ENCODE measurements at regions of chr2 and their contacts with region 1.

Region 1: GRCh38 chr2:11583840-11584524 is 50.1 kb downstream of the GREB1 start:
- DNase-seq: peak; percentile 95
- H3K4me3 ChIP-seq: no peak overlapping the region; a peak in 1 of 4 replicates
- H3K27ac ChIP-seq: peak overlapping the region in 1 of 2 experiments; percentile 80; a peak in 2 of 4 replicates
- H3K4me1 ChIP-seq: no peaks in the 10 kb centered on the region; a peak in 2 of 4 replicates
- H3K27me3 ChIP-seq: no peaks in the 10 kb centered on the region
- CTCF ChIP-seq: peak; percentile 100
- EP300 ChIP-seq: peak in 1 of 2 experiments; percentile 12; a peak in 1 of 4 replicates
- RAD21 ChIP-seq: peak; percentile 100

Region 2: DNA sequence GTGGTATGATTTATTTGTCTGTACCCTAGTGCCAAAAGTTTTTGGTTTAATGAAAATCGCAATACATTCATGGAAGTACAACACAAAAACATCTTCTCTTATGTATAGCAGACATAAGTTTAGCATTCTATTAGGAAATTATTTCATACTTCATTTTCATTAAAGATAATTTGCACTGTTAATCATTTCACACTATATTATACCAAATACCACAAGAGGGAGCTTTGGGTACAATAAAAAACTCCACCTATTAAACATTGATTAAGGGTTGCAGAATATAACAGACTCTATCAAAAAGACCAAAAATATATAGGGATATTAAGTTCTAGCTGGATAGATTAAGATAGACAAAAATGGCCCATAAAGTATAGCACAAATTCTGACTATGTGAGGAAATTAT is 349.7 kb before region 1 on chr2:
- CTCF ChIA-PET with region 1: interaction called, 10 read pairs
- POLR2A ChIA-PET with region 1: no interaction called
- DNase-seq: peak; percentile 31
- H3K4me3 ChIP-seq: no peak overlapping the region
- H3K27ac ChIP-seq: no peak overlapping the region
- H3K4me1 ChIP-seq: no peaks in the 10 kb centered on the region
- H3K27me3 ChIP-seq: no peaks in the 10 kb centered on the region
- CTCF ChIP-seq: peak; percentile 82
- EP300 ChIP-seq: no peak
- RAD21 ChIP-seq: peak; percentile 76

Region 3: GRCh38 chr2:11477994-11478393 is 106.0 kb before region 1 on chr2:
- CTCF ChIA-PET with region 1: interaction called, 708 read pairs
- POLR2A ChIA-PET with region 1: interaction called, 7 read pairs
- DNase-seq: peak; percentile 74
- H3K4me3 ChIP-seq: no peak overlapping the region; a peak in 1 of 4 replicates
- H3K27ac ChIP-seq: no peak overlapping the region
- H3K4me1 ChIP-seq: peaks cover 0 to 3% of the 10 kb centered on the region in 2 experiments; a peak in 1 of 4 replicates
- H3K27me3 ChIP-seq: peaks cover 12% of the 10 kb centered on the region; the same call in 1 of the 2 replicates
- CTCF ChIP-seq: peak; percentile 99
- EP300 ChIP-seq: 0 out of 4 replicates have a peak, but pooled peaks of 1 of the 2 experiments have one; percentile 12
- RAD21 ChIP-seq: peak; percentile 93

Region 4: DNA sequence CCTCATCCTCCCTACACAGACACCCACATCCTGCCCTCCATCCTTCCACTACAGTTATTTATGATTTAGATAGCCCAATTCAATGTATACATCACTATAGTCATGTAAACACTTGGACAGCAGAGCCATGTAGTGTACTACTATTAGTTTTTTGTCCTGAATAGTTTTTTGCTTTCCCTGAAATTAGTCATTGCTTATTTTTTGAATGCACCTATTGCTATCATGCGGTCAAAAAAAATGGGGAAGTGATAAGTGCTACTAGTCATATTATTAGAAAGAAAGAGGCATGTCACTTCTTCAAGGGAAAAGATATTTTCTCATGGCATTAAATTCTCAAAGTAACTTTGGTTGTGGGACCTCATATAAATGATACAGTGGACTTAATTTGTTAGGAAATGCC is 57.0 kb before region 1 on chr2:
- CTCF ChIA-PET with region 1: interaction called, 10 read pairs
- POLR2A ChIA-PET with region 1: no interaction called
- DNase-seq: no peak
- H3K4me3 ChIP-seq: no peak overlapping the region
- H3K27ac ChIP-seq: no peak overlapping the region
- H3K4me1 ChIP-seq: peaks cover 0 to 13% of the 10 kb centered on the region in 2 experiments; a peak in 2 of 4 replicates
- H3K27me3 ChIP-seq: no peaks in the 10 kb centered on the region
- CTCF ChIP-seq: no peak
- EP300 ChIP-seq: no peak
- RAD21 ChIP-seq: no peak

Region 5: GRCh38 chr2:11573418-11574175 is 10.4 kb before region 1 on chr2:
- CTCF ChIA-PET with region 1: interaction called, 123 read pairs
- POLR2A ChIA-PET with region 1: no interaction called
- DNase-seq: no peak
- H3K4me3 ChIP-seq: no peak overlapping the region
- H3K27ac ChIP-seq: no peak overlapping the region
- H3K4me1 ChIP-seq: no peaks in the 10 kb centered on the region; a peak in 1 of 4 replicates
- H3K27me3 ChIP-seq: no peaks in the 10 kb centered on the region
- CTCF ChIP-seq: no peak
- EP300 ChIP-seq: no peak
- RAD21 ChIP-seq: no peak

Region 6: DNA sequence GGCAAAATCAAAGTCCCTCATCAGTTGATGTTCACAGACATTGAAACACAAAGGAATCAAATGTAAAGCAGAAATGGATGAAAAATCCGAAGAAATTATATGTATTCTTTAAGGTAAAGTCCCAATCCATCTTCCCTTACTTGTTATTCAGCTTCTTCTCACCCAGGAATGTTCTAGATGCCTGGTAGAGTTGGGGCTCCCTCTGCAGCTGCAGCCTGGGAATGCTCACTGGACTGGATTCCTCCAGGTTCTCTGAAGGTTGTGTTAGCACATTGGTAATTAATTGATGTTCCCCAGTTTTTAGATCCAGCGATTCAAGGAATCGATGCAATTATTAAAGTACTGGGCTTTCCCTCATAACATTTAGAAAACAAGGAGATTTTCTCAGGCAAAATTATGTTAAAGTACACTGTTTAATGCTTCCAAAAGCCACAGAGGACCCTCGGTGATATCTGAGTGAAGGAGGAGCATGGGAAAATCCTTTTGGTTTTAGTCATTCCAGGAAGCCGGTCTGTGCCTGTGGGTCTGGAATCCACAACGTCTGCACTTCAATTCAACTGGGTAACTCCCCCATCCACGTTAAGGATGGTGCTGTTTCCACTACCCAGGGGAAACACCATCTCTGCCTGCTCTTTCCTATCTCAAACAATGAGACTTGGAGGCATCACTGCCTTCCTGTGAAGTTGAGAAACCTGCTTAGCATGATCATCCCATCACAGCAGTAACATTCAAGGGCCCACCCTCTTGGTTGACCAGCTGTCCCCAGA is 64.0 kb after region 1 on chr2:
- CTCF ChIA-PET with region 1: interaction called, 10 read pairs
- POLR2A ChIA-PET with region 1: no interaction called
- DNase-seq: no peak
- H3K4me3 ChIP-seq: no peak overlapping the region
- H3K27ac ChIP-seq: no peak overlapping the region
- H3K4me1 ChIP-seq: no peaks in the 10 kb centered on the region
- H3K27me3 ChIP-seq: no peaks in the 10 kb centered on the region
- CTCF ChIP-seq: peak; percentile 51
- EP300 ChIP-seq: no peak
- RAD21 ChIP-seq: peak; percentile 29

Measured in SK-N-SH (cell line).